IMR-90 (cell line): ENCODE measurements at regions of chr6 and their contacts with region 1.

Region 1: GRCh38 chr6:39302669-39303424 is 11.4 kb downstream of the KCNK17 start:
- DNase-seq: peak; percentile 47
- ATAC-seq: peak; percentile 95
- H3K4me3 ChIP-seq: no peak overlapping the region
- H3K27ac ChIP-seq: no peak overlapping the region
- H3K4me1 ChIP-seq: no peaks in the 10 kb centered on the region
- H3K27me3 ChIP-seq: no peaks in the 10 kb centered on the region
- CTCF ChIP-seq: peak; percentile 72
- POLR2A ChIP-seq: no peak
- RAD21 ChIP-seq: peak; percentile 73

Region 2: GRCh38 chr6:38871741-38872568 is 430.9 kb before region 1 on chr6:
- CTCF ChIA-PET with region 1: interaction called, 8 read pairs
- POLR2A ChIA-PET with region 1: no interaction called
- dilution Hi-C with region 1: no loop called
- in situ Hi-C with region 1: loop called (anchors 5 kb)
- intact Hi-C with region 1: loop called (anchors 1 kb)
- DNase-seq: peak; percentile 36
- ATAC-seq: peak; percentile 92
- H3K4me3 ChIP-seq: no peak overlapping the region
- H3K27ac ChIP-seq: no peak overlapping the region
- H3K4me1 ChIP-seq: no peaks in the 10 kb centered on the region
- H3K27me3 ChIP-seq: 0 out of 2 replicates have a peak, but pooled peaks cover 1% of the 10 kb centered on the region
- CTCF ChIP-seq: peak; percentile 80
- POLR2A ChIP-seq: no peak
- RAD21 ChIP-seq: peak; percentile 79

Region 3: GRCh38 chr6:38973178-38974054 is 329.4 kb before region 1 on chr6:
- CTCF ChIA-PET with region 1: interaction called, 20 read pairs
- POLR2A ChIA-PET with region 1: no interaction called
- dilution Hi-C with region 1: no loop called
- in situ Hi-C with region 1: loop called (anchors 10 kb)
- intact Hi-C with region 1: loop called (anchors 1 kb)
- DNase-seq: peak; percentile 79
- ATAC-seq: peak; percentile 86
- H3K4me3 ChIP-seq: no peak overlapping the region
- H3K27ac ChIP-seq: no peak overlapping the region
- H3K4me1 ChIP-seq: no peaks in the 10 kb centered on the region
- H3K27me3 ChIP-seq: no peaks in the 10 kb centered on the region
- CTCF ChIP-seq: peak; percentile 59
- POLR2A ChIP-seq: no peak
- RAD21 ChIP-seq: peak; percentile 58

Region 4: DNA sequence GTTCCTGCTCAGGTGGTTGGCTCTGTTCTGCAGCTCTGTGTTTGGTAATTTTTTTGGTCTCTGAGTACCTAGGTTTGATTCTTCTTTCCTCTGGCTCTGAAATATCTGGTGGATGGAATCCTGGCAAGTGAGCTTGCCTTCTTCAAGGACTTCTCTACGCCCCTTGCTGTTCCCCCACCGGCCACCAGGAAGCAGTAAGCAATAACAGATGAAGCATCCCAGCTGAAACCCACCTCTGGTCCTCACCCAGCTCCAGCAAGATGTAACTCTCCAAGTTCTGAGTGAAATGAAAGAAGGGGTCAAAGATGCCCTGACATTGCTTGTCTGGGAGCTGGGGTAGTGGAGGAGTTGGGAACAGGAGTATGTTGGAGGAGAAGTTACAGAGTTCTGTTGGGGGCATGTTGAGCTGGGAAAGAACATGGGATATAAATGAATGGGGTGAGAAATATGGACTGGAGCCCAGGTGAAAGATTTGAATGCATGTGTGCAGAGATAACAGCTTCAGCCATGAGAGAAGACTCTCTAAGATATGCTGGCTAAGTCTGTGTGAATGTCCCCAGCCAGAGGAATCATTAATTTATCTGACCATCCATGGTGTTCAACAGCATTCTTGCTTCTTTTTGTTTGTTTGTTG is 305.6 kb before region 1 on chr6:
- CTCF ChIA-PET with region 1: interaction called, 5 read pairs
- POLR2A ChIA-PET with region 1: no interaction called
- dilution Hi-C with region 1: no loop called
- in situ Hi-C with region 1: no loop called
- intact Hi-C with region 1: loop called (anchors 2 kb)
- DNase-seq: peak; percentile 12
- ATAC-seq: no peak; the same call in 1 of the 2 replicates
- H3K4me3 ChIP-seq: no peak overlapping the region
- H3K27ac ChIP-seq: no peak overlapping the region
- H3K4me1 ChIP-seq: no peaks in the 10 kb centered on the region
- H3K27me3 ChIP-seq: no peaks in the 10 kb centered on the region; the same call in 1 of the 2 replicates
- CTCF ChIP-seq: peak; percentile 43
- POLR2A ChIP-seq: no peak
- RAD21 ChIP-seq: peak; percentile 47

Region 5: GRCh38 chr6:39088331-39088730 is 214.5 kb before region 1 on chr6:
- CTCF ChIA-PET with region 1: interaction called, 5 read pairs
- POLR2A ChIA-PET with region 1: no interaction called
- dilution Hi-C with region 1: no loop called
- in situ Hi-C with region 1: no loop called
- intact Hi-C with region 1: loop called (anchors 1 kb)
- DNase-seq: peak; percentile 68
- ATAC-seq: peak; percentile 99
- H3K4me3 ChIP-seq: no peak overlapping the region
- H3K27ac ChIP-seq: no peak overlapping the region
- H3K4me1 ChIP-seq: no peaks in the 10 kb centered on the region
- H3K27me3 ChIP-seq: peaks cover 6% of the 10 kb centered on the region; the same call in 1 of the 2 replicates
- CTCF ChIP-seq: peak; percentile 48
- POLR2A ChIP-seq: no peak
- RAD21 ChIP-seq: peak; percentile 48

Region 6: GRCh38 chr6:39166189-39166911 is 136.5 kb before region 1 on chr6:
- CTCF ChIA-PET with region 1: interaction called, 8 read pairs
- POLR2A ChIA-PET with region 1: no interaction called
- dilution Hi-C with region 1: no loop called
- in situ Hi-C with region 1: loop called (anchors 5 kb)
- intact Hi-C with region 1: loop called (anchors 1 kb)
- DNase-seq: peak; percentile 37
- ATAC-seq: peak; percentile 91
- H3K4me3 ChIP-seq: no peak overlapping the region
- H3K27ac ChIP-seq: no peak overlapping the region
- H3K4me1 ChIP-seq: no peaks in the 10 kb centered on the region
- H3K27me3 ChIP-seq: no peaks in the 10 kb centered on the region; the same call in 1 of the 2 replicates
- CTCF ChIP-seq: peak; percentile 65
- POLR2A ChIP-seq: no peak
- RAD21 ChIP-seq: peak; percentile 69

Region 7: DNA sequence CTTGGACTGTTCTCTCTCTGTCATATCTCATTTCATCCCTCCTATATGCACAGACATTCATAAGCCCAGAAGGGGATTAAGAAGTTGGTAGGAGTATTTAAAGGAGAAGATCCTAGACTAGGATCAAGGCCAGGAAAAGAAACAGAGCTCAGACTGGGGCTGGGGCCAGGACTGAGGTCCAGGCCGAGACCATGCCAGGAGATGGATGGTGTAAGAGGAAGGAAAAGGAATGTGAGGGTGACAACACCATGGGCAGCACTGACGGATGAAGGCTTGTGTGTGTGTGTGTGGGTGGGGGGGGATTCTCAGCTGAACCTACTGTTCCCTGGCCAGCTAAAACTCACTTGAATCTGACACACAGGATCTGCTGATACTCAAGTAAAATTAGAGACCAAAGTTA is 240.2 kb after region 1 on chr6:
- CTCF ChIA-PET with region 1: no interaction called
- POLR2A ChIA-PET with region 1: no interaction called
- dilution Hi-C with region 1: no loop called
- in situ Hi-C with region 1: no loop called
- intact Hi-C with region 1: no loop called
- DNase-seq: no peak
- ATAC-seq: no peak
- H3K4me3 ChIP-seq: no peak overlapping the region
- H3K27ac ChIP-seq: no peak overlapping the region
- H3K4me1 ChIP-seq: no peaks in the 10 kb centered on the region
- H3K27me3 ChIP-seq: no peaks in the 10 kb centered on the region
- CTCF ChIP-seq: no peak
- POLR2A ChIP-seq: no peak
- RAD21 ChIP-seq: no peak

Region 8: DNA sequence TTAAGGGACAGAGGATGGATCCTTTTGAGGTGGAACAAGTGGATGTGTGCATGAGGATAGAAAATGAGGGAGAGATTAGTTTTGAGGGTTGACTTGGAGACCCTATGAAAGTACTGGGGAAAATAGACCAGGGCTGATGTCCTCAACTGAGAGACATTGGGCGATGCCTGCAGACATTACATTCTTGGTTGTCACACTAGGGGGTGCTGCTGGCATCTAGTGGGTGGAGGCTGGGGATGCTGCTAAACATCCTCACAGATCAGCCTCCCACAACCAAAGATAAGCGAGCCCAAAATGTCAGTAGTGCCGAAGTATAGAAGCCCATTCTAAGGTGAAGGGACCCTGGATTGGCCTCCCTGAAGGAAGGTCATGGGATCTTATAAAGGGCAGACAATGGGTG is 568.1 kb after region 1 on chr6:
- CTCF ChIA-PET with region 1: no interaction called
- POLR2A ChIA-PET with region 1: no interaction called
- dilution Hi-C with region 1: no loop called
- in situ Hi-C with region 1: no loop called
- intact Hi-C with region 1: no loop called
- DNase-seq: no peak
- ATAC-seq: no peak
- H3K4me3 ChIP-seq: no peak overlapping the region
- H3K27ac ChIP-seq: no peak overlapping the region
- H3K4me1 ChIP-seq: no peaks in the 10 kb centered on the region
- H3K27me3 ChIP-seq: no peaks in the 10 kb centered on the region
- CTCF ChIP-seq: no peak
- POLR2A ChIP-seq: no peak
- RAD21 ChIP-seq: no peak